Activated CD4-positive, alpha-beta T cell treated with anti-CD3 and anti-CD28 coated beads, Interleukin-2, amount 10 ng/mL, durations not matched to agents 7 days and 5 days (primary cell): ENCODE measurements at regions of chr18 and their contacts with region 1.

Region 1: DNA sequence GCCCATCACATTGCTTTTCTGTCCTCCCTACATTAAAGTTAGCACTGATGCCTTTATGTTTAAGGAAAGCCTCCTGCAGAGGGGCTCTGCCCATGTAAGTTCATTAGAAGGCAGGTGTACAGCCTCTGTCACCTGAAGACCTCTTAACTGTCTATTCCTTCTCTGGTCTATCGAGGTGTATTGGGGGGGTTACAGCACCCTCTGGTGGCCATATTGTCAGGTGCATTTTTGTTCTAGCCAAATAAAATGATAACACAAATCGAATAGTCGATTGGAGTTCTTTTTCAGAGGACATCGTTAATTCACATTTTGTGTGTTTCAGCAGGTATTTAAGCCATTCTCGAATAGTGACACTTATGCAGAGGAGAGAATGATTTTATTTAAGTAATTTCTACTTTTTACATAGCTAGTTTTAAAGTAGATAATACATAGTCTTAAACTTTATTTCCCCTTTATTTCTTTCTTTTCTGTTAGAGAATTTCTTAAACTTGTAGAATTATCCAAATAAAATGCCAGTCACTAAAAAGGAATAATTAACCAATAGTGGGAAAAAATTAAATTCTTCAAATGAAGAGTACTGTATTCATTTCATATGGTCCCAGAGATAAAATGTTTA is 136.8 kb downstream of the NEDD4L start:
- DNase-seq: peak; percentile 66
- H3K4me3 Mint-ChIP-seq: no peak overlapping the region
- H3K27ac Mint-ChIP-seq: no peak overlapping the region
- H3K4me1 Mint-ChIP-seq: no peaks in the 10 kb centered on the region
- H3K27me3 Mint-ChIP-seq: no peaks in the 10 kb centered on the region

Region 2: GRCh38 chr18:57959278-57959677 is 221.6 kb before region 1 on chr18:
- CTCF ChIA-PET with region 1: no interaction called
- POLR2A ChIA-PET with region 1: no interaction called
- DNase-seq: no peak
- H3K4me3 Mint-ChIP-seq: no peak overlapping the region
- H3K27ac Mint-ChIP-seq: no peak overlapping the region
- H3K4me1 Mint-ChIP-seq: no peaks in the 10 kb centered on the region
- H3K27me3 Mint-ChIP-seq: peaks cover 31% of the 10 kb centered on the region

Region 3: GRCh38 chr18:58484989-58485981 is 304.4 kb after region 1 on chr18:
- CTCF ChIA-PET with region 1: no interaction called
- POLR2A ChIA-PET with region 1: interaction called, 10 read pairs
- DNase-seq: no peak
- H3K4me3 Mint-ChIP-seq: no peak overlapping the region
- H3K27ac Mint-ChIP-seq: no peak overlapping the region
- H3K4me1 Mint-ChIP-seq: peaks cover 10% of the 10 kb centered on the region
- H3K27me3 Mint-ChIP-seq: peaks cover 15% of the 10 kb centered on the region